ENCODE measurements at regions of chr19 and their contacts with region 1.

Region 1: GRCh38 chr19:29761575-29762232 is 46.6 kb upstream of the C19orf12 start:
- DNase-seq: peak; percentile 19
- H3K4me3 ChIP-seq: peak overlapping the region in 3 of 4 donors; percentile 8 to 20 (median 11)
- H3K27ac ChIP-seq: peak overlapping the region; percentile 43 to 61 (median 51)
- H3K4me1 ChIP-seq: peaks cover 0 to 13% (median 4%) of the 10 kb centered on the region in 4 donors
- H3K27me3 ChIP-seq: no peaks in the 10 kb centered on the region
- CTCF ChIP-seq: no peak
- EP300 ChIP-seq: no peak
- POLR2A ChIP-seq: no peak

Region 2: GRCh38 chr19:29873024-29873800 is 111.5 kb after region 1 on chr19:
- in situ Hi-C with region 1: loop called in 2 of 4 experiments (anchors 10 to 25 kb)
- intact Hi-C with region 1: loop called (anchors 5 kb)
- DNase-seq: peak; percentile 49
- H3K4me3 ChIP-seq: peak overlapping the region; percentile 18 to 48 (median 31)
- H3K27ac ChIP-seq: no peak overlapping the region
- H3K4me1 ChIP-seq: peaks cover 7 to 15% (median 11%) of the 10 kb centered on the region in 4 donors
- H3K27me3 ChIP-seq: peaks cover 32% of the 10 kb centered on the region
- CTCF ChIP-seq: peak; percentile 40 to 88 (median 81)
- EP300 ChIP-seq: no peak
- POLR2A ChIP-seq: no peak

Region 3: DNA sequence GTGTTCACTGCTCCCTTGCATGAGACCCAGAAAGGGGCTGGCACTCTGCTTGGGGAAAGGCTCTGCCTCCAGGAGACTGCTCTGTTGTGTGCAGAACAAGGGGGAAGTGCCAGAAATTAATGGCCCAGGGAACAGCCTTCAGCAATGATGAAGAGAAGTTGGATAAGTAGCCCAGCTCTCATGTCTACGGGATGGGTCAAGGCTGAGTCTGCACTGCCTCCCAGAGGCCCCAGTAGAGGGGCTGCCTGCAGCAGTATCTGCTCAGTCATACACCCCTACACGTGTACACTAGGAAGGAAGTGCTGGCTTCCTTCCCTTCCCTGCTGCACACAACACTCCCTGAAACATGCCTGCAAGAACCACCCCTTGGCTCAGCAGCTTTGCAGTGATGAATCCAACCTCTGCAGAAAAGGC is 125.7 kb after region 1 on chr19:
- in situ Hi-C with region 1: loop called in 1 of 4 experiments (anchors 10 kb)
- intact Hi-C with region 1: no loop called
- DNase-seq: no peak
- H3K4me3 ChIP-seq: no peak overlapping the region
- H3K27ac ChIP-seq: no peak overlapping the region
- H3K4me1 ChIP-seq: no peaks in the 10 kb centered on the region
- H3K27me3 ChIP-seq: no peaks in the 10 kb centered on the region
- CTCF ChIP-seq: no peak
- EP300 ChIP-seq: no peak
- POLR2A ChIP-seq: no peak